ENCODE measurements at regions of chr10 and their contacts with region 1.

Region 1: DNA sequence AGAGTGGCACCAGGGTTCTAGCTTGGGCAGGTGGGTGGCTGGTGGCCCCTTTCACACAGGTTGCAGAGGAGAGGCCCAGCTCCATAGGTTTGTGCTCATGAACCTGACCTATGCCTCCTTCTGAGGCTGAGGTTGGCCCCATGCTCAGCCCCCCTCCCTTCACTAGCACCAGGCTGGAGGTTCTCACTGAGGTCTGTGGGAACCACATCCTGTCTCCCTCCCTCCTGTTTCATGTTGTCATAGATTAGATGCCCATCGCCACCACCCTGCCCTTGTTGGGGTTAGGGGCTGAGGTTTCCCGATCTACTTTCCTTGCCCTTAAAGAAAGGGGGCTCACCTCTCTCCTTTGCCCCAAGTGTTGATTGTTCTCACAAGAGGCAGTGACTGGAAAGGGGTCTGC is 14.7 kb downstream of the NEUROG3 start:
- DNase-seq: no peak
- ATAC-seq: no peak
- H3K4me3 ChIP-seq: no peak overlapping the region
- H3K27ac ChIP-seq: no peak overlapping the region
- H3K4me1 ChIP-seq: no peaks in the 10 kb centered on the region
- H3K27me3 ChIP-seq: peaks cover 6% of the 10 kb centered on the region; the same call in 1 of the 2 replicates
- CTCF ChIP-seq: no peak

Region 2: GRCh38 chr10:69573056-69573806 is 14.7 kb after region 1 on chr10 and contains the start of gene NEUROG3:
- CTCF ChIA-PET with region 1: interaction called, 6 read pairs
- POLR2A ChIA-PET with region 1: interaction called, 10 read pairs
- in situ Hi-C with region 1: no loop called
- intact Hi-C with region 1: no loop called
- DNase-seq: no peak
- ATAC-seq: no peak
- H3K4me3 ChIP-seq: peak within 1 kb of the TSS; percentile 25 to 51
- H3K27ac ChIP-seq: no peak within 1 kb of the TSS
- H3K4me1 ChIP-seq: peaks cover 25% of the 10 kb centered on the region
- H3K27me3 ChIP-seq: peaks cover 89% of the 10 kb centered on the region
- CTCF ChIP-seq: no peak
- total RNA-seq, gene NEUROG3: not detected